ENCODE measurements at regions of chr3 and their contacts with region 1.

Region 1: DNA sequence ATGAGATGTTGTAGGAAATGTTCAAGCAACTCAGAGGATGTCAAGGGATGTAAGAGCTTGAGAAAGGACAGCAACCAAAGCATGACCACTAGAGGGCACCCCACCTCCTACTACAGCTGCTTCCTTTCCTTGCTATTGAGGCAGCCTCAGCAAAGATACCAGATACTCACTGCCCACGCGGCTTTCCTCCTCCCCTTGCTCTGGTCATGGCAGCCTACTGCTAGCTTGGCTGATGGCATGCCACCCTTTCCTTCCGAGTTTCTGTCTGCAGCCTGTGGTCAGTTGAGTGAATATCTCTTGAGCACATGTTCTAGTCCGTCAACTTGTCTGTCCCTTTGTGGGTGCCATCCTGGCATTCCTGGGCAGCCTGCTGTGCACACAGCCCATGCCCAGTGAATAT is 4.4 kb upstream of the CXCR6 start:
- DNase-seq: peak; percentile 89
- ATAC-seq: peak; percentile 84
- H3K4me3 ChIP-seq: no peak overlapping the region
- H3K27ac ChIP-seq: no peak overlapping the region
- H3K4me1 ChIP-seq: peaks cover 14% of the 10 kb centered on the region
- H3K27me3 ChIP-seq: no peaks in the 10 kb centered on the region
- CTCF ChIP-seq: peak; percentile 92

Region 2: DNA sequence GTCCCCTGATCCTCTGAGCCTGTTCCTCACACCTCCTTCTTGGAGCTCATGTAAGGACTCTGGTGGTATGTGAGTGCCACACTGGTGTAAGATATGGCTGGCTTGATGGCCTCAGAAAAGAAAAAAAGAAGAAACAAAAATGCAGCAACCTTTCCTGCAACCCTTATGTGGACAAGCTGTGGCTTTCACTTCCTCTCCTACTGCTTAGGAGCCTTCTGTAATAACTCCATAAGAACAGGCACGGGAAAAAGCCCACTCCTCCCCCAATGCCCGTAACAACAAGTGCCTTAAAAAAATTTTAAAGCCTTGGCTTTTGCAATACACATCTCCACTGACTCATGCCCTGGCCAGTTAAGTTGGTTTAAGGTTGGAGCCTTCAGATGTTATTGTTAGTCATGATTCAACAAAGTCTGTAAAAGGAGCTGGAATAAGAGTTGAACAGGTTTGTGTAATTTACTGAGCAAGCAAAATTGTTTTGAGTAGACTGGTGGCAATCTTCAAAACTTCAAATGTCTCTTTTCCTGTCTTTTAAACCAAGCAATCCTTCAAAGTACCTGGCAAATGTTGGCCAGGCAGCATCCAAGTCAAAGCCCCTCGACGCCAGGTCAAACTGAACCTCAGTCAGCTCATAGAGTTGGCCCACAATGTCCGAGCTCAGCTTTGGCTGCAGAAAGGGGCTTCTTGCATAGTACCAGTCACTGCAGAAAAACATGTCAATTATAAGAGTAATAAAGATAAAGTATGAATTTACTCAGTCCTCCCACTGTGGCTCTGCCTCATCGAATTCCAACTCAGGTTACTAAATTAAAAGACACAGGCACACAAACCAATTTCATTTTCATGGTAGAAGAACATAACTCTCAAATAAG is 33.9 kb after region 1 on chr3:
- CTCF ChIA-PET with region 1: interaction called, 5 read pairs
- POLR2A ChIA-PET with region 1: no interaction called
- intact Hi-C with region 1: loop called (anchors 2 kb)
- DNase-seq: peak; percentile 94
- ATAC-seq: peak; percentile 98
- H3K4me3 ChIP-seq: peak overlapping the region; percentile 30; the same call in 1 of the 2 replicates
- H3K27ac ChIP-seq: peak overlapping the region; percentile 53
- H3K4me1 ChIP-seq: peaks cover 24% of the 10 kb centered on the region
- H3K27me3 ChIP-seq: no peaks in the 10 kb centered on the region
- CTCF ChIP-seq: no peak

Measured in PC-3 (cell line).